Activated T-helper 2 cell treated with anti-CD3 and anti-CD28 coated beads, Interferon-gamma antibody, Interleukin-2, Interleukin-4, amounts not matched to agents 10 μg/mL and 5 μg/mL and 100 μg/mL, durations not matched to agents 14 hours and 24 hours and 36 hours (primary cell): ENCODE measurements at regions of chr14 and their contacts with region 1.

Region 1: GRCh38 chr14:89681086-89682018 is 264.3 kb upstream of the FOXN3 start:
- DNase-seq: peak; percentile 26
- H3K4me3 Mint-ChIP-seq: peak overlapping the region; percentile 53
- H3K27ac Mint-ChIP-seq: peak overlapping the region; percentile 88
- H3K4me1 Mint-ChIP-seq: peaks cover 38% of the 10 kb centered on the region
- H3K27me3 Mint-ChIP-seq: no peaks in the 10 kb centered on the region

Region 2: GRCh38 chr14:89422181-89422951 is 259.0 kb before region 1 on chr14:
- intact Hi-C with region 1: loop called (anchors 5 kb)
- DNase-seq: no peak
- H3K4me3 Mint-ChIP-seq: peak overlapping the region; percentile 24
- H3K27ac Mint-ChIP-seq: peak overlapping the region; percentile 83
- H3K4me1 Mint-ChIP-seq: peaks cover 75% of the 10 kb centered on the region
- H3K27me3 Mint-ChIP-seq: no peaks in the 10 kb centered on the region

Region 3: GRCh38 chr14:89625244-89625713 is 56.1 kb before region 1 on chr14:
- intact Hi-C with region 1: loop called (anchors 1 kb)
- DNase-seq: no peak
- H3K4me3 Mint-ChIP-seq: no peak overlapping the region
- H3K27ac Mint-ChIP-seq: peak overlapping the region; percentile 93
- H3K4me1 Mint-ChIP-seq: peaks cover 65% of the 10 kb centered on the region
- H3K27me3 Mint-ChIP-seq: no peaks in the 10 kb centered on the region

Region 4: DNA sequence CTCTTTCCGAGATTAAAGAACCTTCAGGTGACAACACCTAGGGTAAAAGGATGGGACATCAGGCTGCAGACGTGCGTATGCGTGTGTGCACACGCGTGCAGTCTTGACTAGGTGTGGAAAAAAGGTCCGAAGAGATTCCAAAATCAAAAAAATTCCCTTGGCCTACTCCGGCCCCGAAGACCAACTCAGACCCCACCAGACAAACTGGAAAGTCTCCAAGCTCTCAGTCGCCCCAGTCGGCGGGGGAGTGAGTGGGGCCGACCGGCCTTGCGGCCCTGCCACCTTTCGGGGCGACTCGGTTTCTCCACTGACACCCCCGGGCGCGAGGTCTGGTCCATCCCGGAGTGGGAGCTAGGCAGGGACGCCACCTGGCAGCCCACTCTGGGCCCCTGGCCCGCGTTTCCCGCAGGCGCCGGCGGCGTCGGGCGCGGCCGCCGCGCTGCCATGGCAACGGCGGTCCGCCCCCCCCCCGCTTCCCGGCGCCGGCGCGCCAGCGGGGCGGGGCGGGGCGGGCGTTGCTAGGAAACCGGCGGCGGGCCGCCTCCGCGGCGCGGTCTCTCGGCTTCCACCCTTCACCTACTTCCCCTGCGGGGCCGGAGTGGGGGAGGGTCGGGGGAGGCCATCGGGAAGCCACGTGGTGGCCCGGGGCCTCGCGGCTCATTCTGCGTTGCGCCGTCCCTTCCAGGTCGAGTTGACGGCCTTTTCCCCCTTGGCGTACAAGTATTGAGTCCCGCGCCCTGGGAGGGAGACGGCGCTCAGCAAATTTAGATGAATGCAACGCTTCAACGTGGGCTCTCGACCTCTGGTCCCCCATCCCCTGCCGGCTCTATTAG is 20.1 kb after region 1 on chr14:
- intact Hi-C with region 1: loop called (anchors 2 kb)
- DNase-seq: peak; percentile 81
- H3K4me3 Mint-ChIP-seq: peak overlapping the region; percentile 57
- H3K27ac Mint-ChIP-seq: peak overlapping the region; percentile 79
- H3K4me1 Mint-ChIP-seq: peaks cover 43% of the 10 kb centered on the region
- H3K27me3 Mint-ChIP-seq: no peaks in the 10 kb centered on the region

Region 5: GRCh38 chr14:89773644-89774316 is 92.4 kb after region 1 on chr14:
- intact Hi-C with region 1: loop called (anchors 5 kb)
- DNase-seq: peak; percentile 39
- H3K4me3 Mint-ChIP-seq: peak overlapping the region; percentile 7
- H3K27ac Mint-ChIP-seq: no peak overlapping the region
- H3K4me1 Mint-ChIP-seq: peaks cover 23% of the 10 kb centered on the region
- H3K27me3 Mint-ChIP-seq: peaks cover 10% of the 10 kb centered on the region

Region 6: GRCh38 chr14:90428676-90429075 is 747.3 kb after region 1 on chr14:
- intact Hi-C with region 1: no loop called
- DNase-seq: no peak
- H3K4me3 Mint-ChIP-seq: no peak overlapping the region
- H3K27ac Mint-ChIP-seq: no peak overlapping the region
- H3K4me1 Mint-ChIP-seq: no peaks in the 10 kb centered on the region
- H3K27me3 Mint-ChIP-seq: no peaks in the 10 kb centered on the region